ENCODE measurements at regions of chr18 and their contacts with region 1.

Region 1: GRCh38 chr18:30044496-30044895 is 998.0 kb downstream of the DSC3 start:
- DNase-seq: no peak
- H3K4me3 ChIP-seq: no peak overlapping the region
- H3K27ac ChIP-seq: no peak overlapping the region
- H3K4me1 ChIP-seq: no peaks in the 10 kb centered on the region
- H3K27me3 ChIP-seq: no peaks in the 10 kb centered on the region
- CTCF ChIP-seq: no peak

Region 2: GRCh38 chr18:29104671-29105070 is 939.8 kb before region 1 on chr18:
- intact Hi-C with region 1: no loop called
- DNase-seq: no peak
- H3K4me3 ChIP-seq: no peak overlapping the region
- H3K27ac ChIP-seq: no peak overlapping the region
- H3K4me1 ChIP-seq: no peaks in the 10 kb centered on the region
- H3K27me3 ChIP-seq: no peaks in the 10 kb centered on the region
- CTCF ChIP-seq: no peak

Region 3: GRCh38 chr18:29164020-29164706 is 880.3 kb before region 1 on chr18:
- intact Hi-C with region 1: no loop called
- DNase-seq: no peak
- H3K4me3 ChIP-seq: no peak overlapping the region
- H3K27ac ChIP-seq: peak overlapping the region; percentile 27 to 47
- H3K4me1 ChIP-seq: peaks cover 0 to 31% (median 4%) of the 10 kb centered on the region in 4 donors
- H3K27me3 ChIP-seq: no peaks in the 10 kb centered on the region
- CTCF ChIP-seq: no peak

Region 4: DNA sequence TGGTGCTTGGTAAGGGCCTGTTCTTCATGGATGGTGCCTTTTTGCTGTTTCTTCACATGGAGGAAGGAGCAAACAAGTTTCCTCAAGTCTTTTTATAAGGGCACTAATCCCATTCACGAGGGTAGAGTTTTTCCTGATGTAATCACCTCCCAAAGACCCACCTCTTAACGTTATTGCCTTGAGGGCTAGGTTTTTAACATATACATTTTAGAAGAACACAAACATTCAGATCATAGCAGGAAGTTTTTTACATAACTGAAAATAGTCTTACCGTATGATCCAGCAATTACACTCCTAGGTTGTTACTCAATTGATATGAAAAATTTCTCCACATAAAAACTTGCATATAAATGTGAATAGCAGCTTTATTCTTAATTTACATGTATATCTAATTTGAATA is 21.8 kb after region 1 on chr18:
- intact Hi-C with region 1: no loop called
- DNase-seq: no peak
- H3K4me3 ChIP-seq: no peak overlapping the region
- H3K27ac ChIP-seq: no peak overlapping the region
- H3K4me1 ChIP-seq: no peaks in the 10 kb centered on the region
- H3K27me3 ChIP-seq: no peaks in the 10 kb centered on the region
- CTCF ChIP-seq: no peak

Region 5: GRCh38 chr18:30106356-30106755 is 61.9 kb after region 1 on chr18:
- intact Hi-C with region 1: loop called (anchors 10 kb)
- DNase-seq: no peak
- H3K4me3 ChIP-seq: no peak overlapping the region
- H3K27ac ChIP-seq: no peak overlapping the region
- H3K4me1 ChIP-seq: no peaks in the 10 kb centered on the region
- H3K27me3 ChIP-seq: no peaks in the 10 kb centered on the region
- CTCF ChIP-seq: no peak

Region 6: DNA sequence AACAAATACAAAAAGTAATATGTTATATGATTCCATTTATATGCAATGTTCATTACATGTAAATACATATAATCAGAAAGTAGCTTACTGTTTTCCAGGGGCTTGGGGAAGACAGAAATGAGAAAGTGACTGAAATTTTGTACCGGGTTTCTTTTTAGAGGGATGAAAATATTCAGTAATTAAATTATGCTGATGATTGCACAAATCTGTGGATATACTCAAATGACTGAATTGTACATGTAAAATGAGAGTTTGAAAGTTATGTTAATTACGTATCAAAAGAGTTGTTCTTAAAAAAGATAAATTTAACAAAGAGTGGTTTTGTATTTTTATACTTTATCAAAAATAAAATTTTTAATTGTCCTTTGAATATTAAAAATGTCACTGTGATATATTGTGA is 141.7 kb after region 1 on chr18:
- intact Hi-C with region 1: no loop called
- DNase-seq: no peak
- H3K4me3 ChIP-seq: no peak overlapping the region
- H3K27ac ChIP-seq: no peak overlapping the region
- H3K4me1 ChIP-seq: peaks cover 0 to 6% (median 0%) of the 10 kb centered on the region in 4 donors
- H3K27me3 ChIP-seq: no peaks in the 10 kb centered on the region
- CTCF ChIP-seq: no peak